Gastrocnemius medialis (tissue), 4 donors: ENCODE measurements at regions of chr11 and their contacts with region 1.

Region 1: DNA sequence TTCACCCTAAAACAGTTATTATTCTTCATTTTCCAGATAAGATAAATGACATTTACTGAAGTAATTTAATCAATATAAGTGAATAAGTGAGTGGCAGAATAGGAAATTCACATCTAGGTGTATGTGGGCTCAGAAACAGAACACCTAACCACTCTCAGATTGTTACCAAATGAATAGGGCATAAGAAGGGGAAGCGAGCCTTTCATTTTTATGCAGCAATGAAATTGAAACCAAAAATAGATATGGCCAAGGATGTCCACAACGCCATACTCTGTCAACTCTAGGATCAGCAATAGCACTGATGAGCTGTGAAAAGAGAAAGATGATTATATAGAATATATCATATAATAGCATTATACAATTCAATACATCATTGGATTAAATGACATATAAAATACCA is 398.1 kb upstream of the API5 start:
- DNase-seq: no peak
- ATAC-seq: no peak
- H3K4me3 ChIP-seq: no peak overlapping the region
- H3K27ac ChIP-seq: no peak overlapping the region
- H3K4me1 ChIP-seq: no peaks in the 10 kb centered on the region
- H3K27me3 ChIP-seq: no peaks in the 10 kb centered on the region
- CTCF ChIP-seq: no peak
- POLR2A ChIP-seq: no peak

Region 2: GRCh38 chr11:42802201-42802899 is 111.4 kb before region 1 on chr11:
- in situ Hi-C with region 1: loop called in 1 of 4 experiments (anchors 25 kb)
- intact Hi-C with region 1: no loop called
- DNase-seq: no peak
- ATAC-seq: no peak
- H3K4me3 ChIP-seq: no peak overlapping the region
- H3K27ac ChIP-seq: no peak overlapping the region
- H3K4me1 ChIP-seq: no peaks in the 10 kb centered on the region
- H3K27me3 ChIP-seq: no peaks in the 10 kb centered on the region
- CTCF ChIP-seq: no peak
- POLR2A ChIP-seq: no peak